ENCODE measurements at regions of chr12 and their contacts with region 1.

Region 1: GRCh38 chr12:54251667-54252284 is 28.1 kb downstream of the CBX5 start:
- DNase-seq: peak; percentile 41
- H3K4me3 Mint-ChIP-seq: no peak overlapping the region
- H3K27ac Mint-ChIP-seq: no peak overlapping the region
- H3K4me1 Mint-ChIP-seq: no peaks in the 10 kb centered on the region
- H3K27me3 Mint-ChIP-seq: no peaks in the 10 kb centered on the region
- CTCF ChIP-seq: peak; percentile 42

Region 2: GRCh38 chr12:54279866-54280467 is 28.2 kb after region 1 on chr12 and contains the start of gene CBX5:
- CTCF ChIA-PET with region 1: interaction called, 13 read pairs
- intact Hi-C with region 1: no loop called
- DNase-seq: peak; percentile 99
- H3K4me3 Mint-ChIP-seq: no peak within 1 kb of the TSS
- H3K27ac Mint-ChIP-seq: no peak within 1 kb of the TSS
- H3K4me1 Mint-ChIP-seq: peaks cover 24% of the 10 kb centered on the region
- H3K27me3 Mint-ChIP-seq: no peaks in the 10 kb centered on the region
- CTCF ChIP-seq: no peak
- total RNA-seq, gene CBX5: 128 and 173 TPM in 2 replicates

Measured in Calu3 (cell line).